HepG2 (cell line): ENCODE measurements at regions of chr6 and their contacts with region 1.

Region 1: DNA sequence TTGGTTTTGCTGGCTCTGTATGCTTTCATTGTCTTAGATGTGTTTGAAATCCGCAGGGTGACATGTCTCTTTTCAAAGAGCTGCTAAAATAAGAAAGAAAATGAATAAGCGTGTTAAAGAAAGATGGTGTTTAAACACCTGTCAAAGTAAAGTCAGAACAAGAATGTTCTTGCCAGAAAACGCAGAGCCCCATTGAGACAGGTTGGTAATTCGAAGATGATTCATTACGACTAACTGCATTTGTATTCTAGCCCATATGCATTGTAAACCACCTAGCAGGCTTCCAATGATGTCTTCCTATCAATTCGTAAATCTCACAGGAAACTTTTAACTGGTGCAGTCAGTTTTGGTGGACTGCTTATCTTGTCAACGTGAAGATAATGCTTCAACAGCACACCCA is 16.8 kb downstream of the PHACTR2 start:
- DNase-seq: no peak
- ATAC-seq: no peak
- H3K4me3 ChIP-seq: no peak overlapping the region
- H3K27ac ChIP-seq: no peak overlapping the region
- H3K4me1 ChIP-seq: peaks cover 95% of the 10 kb centered on the region
- H3K27me3 ChIP-seq: no peaks in the 10 kb centered on the region
- CTCF ChIP-seq: no peak
- EP300 ChIP-seq: no peak
- POLR2A ChIP-seq: no peak
- RAD21 ChIP-seq: no peak

Region 2: GRCh38 chr6:143727035-143727434 is 32.5 kb after region 1 on chr6:
- CTCF ChIA-PET with region 1: no interaction called
- POLR2A ChIA-PET with region 1: no interaction called
- in situ Hi-C with region 1: no loop called
- intact Hi-C with region 1: loop called (anchors 5 kb)
- DNase-seq: no peak
- ATAC-seq: no peak
- H3K4me3 ChIP-seq: no peak overlapping the region
- H3K27ac ChIP-seq: no peak overlapping the region
- H3K4me1 ChIP-seq: no peaks in the 10 kb centered on the region
- H3K27me3 ChIP-seq: no peaks in the 10 kb centered on the region
- CTCF ChIP-seq: no peak
- EP300 ChIP-seq: no peak
- POLR2A ChIP-seq: no peak
- RAD21 ChIP-seq: no peak